ENCODE measurements at regions of chr4 and their contacts with region 1.

Region 1: GRCh38 chr4:168514249-168514852 is 17.5 kb downstream of the PALLD start:
- DNase-seq: peak; percentile 59
- H3K4me3 Mint-ChIP-seq: no peak overlapping the region
- H3K27ac Mint-ChIP-seq: no peak overlapping the region
- H3K4me1 Mint-ChIP-seq: peaks cover 26% of the 10 kb centered on the region
- H3K27me3 Mint-ChIP-seq: peaks cover 25% of the 10 kb centered on the region

Region 2: GRCh38 chr4:168421671-168422070 is 92.7 kb before region 1 on chr4:
- intact Hi-C with region 1: loop called (anchors 5 kb)
- DNase-seq: peak; percentile 72
- H3K4me3 Mint-ChIP-seq: peak overlapping the region; percentile 44
- H3K27ac Mint-ChIP-seq: peak overlapping the region; percentile 75
- H3K4me1 Mint-ChIP-seq: peaks cover 11% of the 10 kb centered on the region
- H3K27me3 Mint-ChIP-seq: no peaks in the 10 kb centered on the region

Region 3: DNA sequence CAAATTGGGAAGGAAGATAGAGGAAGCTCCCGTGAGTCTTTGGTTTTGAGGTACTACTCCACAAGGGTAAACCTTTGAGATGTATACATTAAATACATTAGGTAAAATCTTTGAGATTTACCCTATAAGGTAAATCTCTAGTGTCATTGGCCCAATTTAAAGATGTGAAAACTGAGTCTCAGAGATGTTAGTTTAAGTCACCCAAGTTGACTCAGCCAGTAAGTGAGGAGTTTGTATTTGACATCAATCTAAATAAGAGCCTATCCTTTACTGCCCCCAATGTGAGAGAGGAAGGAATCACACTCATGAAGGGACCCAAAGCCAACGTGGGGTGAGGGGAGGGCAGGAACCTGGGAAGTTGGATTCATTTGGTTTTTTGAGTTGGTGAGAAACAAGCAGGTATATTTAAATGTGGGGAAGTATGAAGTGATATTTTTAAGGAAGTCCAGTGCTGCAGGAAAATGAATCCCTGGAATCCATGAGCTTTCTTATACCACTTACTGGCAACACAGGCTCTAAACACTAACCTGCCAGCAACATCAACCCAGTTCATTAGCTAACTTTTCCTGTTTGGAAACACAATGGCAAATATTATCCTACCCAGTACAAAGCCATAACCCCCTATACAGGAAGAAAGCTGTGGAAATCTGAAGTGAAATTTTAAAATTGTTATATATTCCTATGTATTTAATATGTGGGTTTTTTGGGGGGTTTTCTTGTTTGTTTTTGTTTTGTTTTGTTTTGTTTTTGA is 37.8 kb after region 1 on chr4:
- intact Hi-C with region 1: loop called (anchors 5 kb)
- DNase-seq: peak; percentile 63
- H3K4me3 Mint-ChIP-seq: no peak overlapping the region
- H3K27ac Mint-ChIP-seq: no peak overlapping the region
- H3K4me1 Mint-ChIP-seq: no peaks in the 10 kb centered on the region
- H3K27me3 Mint-ChIP-seq: peaks cover 13% of the 10 kb centered on the region

Region 4: DNA sequence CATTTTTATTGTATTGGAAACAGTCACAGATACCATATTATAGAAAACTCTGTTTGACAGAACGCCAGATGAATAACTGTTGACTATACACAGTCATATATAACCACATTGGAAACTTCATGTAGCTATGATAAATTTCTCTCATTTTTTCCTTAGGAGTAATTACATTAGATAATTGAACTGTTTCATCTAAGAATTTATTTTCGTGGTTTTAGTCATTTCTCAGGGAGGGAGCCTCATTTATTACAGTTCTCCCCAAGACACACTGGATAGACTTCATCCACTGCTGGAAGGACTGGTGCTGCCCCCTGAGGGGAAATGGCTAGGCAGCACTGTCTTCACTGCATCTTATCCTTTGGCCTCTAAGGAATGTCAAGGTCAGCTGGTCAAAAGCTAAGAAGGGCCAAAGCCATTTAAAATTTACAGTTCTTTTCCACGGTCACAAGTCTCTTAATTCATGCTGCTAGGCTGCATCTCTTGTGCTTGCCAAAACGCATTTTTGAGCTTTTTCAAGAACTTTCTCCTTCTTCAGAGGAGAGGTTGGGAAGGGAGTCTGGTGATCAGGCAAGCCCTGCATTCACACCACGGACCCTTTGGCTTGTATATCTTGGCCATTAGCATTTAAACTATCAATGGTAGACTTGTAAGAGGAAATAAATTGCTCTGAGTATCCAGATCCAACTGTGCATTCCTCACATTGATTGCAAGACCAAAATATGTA is 350.6 kb after region 1 on chr4:
- intact Hi-C with region 1: loop called (anchors 5 kb)
- DNase-seq: no peak
- H3K4me3 Mint-ChIP-seq: no peak overlapping the region
- H3K27ac Mint-ChIP-seq: peak overlapping the region; percentile 79
- H3K4me1 Mint-ChIP-seq: peaks cover 48% of the 10 kb centered on the region
- H3K27me3 Mint-ChIP-seq: no peaks in the 10 kb centered on the region

Region 5: GRCh38 chr4:169410839-169411770 is 896.8 kb after region 1 on chr4:
- intact Hi-C with region 1: loop called (anchors 10 kb)
- DNase-seq: peak; percentile 89
- H3K4me3 Mint-ChIP-seq: peak overlapping the region; percentile 34
- H3K27ac Mint-ChIP-seq: peak overlapping the region; percentile 60
- H3K4me1 Mint-ChIP-seq: peaks cover 34% of the 10 kb centered on the region
- H3K27me3 Mint-ChIP-seq: no peaks in the 10 kb centered on the region

Measured in activated CD4-positive, alpha-beta T cell treated with anti-CD3 and anti-CD28 coated beads, Interleukin-2, amount 10 ng/mL, durations not matched to agents 24 days and 14 days (primary cell).